Psoas muscle (tissue), 8 donors: ENCODE measurements at regions of chr7 and their contacts with region 1.

Region 1: GRCh38 chr7:95476904-95477594 is 8.7 kb upstream of the ASB4 start:
- DNase-seq: peak; percentile 42 to 55
- ATAC-seq: peak; percentile 80 to 91 (median 84)
- H3K4me3 ChIP-seq: peak overlapping the region; percentile 52
- H3K27ac ChIP-seq: peak overlapping the region; percentile 74
- H3K4me1 ChIP-seq: no peaks in the 10 kb centered on the region
- H3K27me3 ChIP-seq: no peaks in the 10 kb centered on the region
- CTCF ChIP-seq: peak; percentile 83

Region 2: GRCh38 chr7:95246831-95247370 is 230.1 kb before region 1 on chr7:
- intact Hi-C with region 1: loop called in 1 of 2 experiments (anchors 10 kb)
- DNase-seq: no peak
- ATAC-seq: peak; percentile 51 to 81 (median 68)
- H3K4me3 ChIP-seq: no peak overlapping the region
- H3K27ac ChIP-seq: no peak overlapping the region
- H3K4me1 ChIP-seq: no peaks in the 10 kb centered on the region
- H3K27me3 ChIP-seq: no peaks in the 10 kb centered on the region
- CTCF ChIP-seq: peak; percentile 62

Region 3: DNA sequence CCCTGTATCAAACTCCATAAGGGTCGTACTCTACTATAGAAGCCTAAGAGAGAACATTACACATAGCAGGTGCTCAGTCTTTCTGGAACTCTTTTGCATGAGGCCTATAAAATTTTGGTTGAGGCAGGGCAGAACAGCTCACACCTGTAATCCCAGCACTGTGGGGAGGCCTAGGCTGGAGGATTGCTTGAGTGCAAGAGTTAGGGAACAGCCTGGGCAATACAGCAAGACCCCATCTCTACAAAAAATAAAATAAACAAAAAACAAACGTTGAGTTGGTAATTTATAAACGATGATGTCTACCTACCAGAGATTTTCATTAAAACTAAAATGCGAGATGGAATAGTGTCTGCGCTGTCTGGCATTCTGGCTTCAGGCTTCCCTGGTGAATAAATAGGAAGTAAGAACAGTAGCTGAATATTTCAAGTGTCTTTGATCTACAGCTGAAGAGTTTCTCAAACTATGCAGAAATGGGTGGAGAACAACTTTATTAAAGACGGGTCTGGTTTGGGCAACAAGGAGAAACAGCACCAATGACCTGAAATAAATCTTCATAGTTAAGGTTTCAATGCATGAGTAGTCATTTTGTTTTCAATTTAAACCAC is 43.0 kb before region 1 on chr7:
- intact Hi-C with region 1: loop called in 1 of 2 experiments (anchors 2 kb)
- DNase-seq: no peak
- ATAC-seq: peak in 1 of 4 donors; percentile 14
- H3K4me3 ChIP-seq: peak overlapping the region; percentile 85
- H3K27ac ChIP-seq: peak overlapping the region; percentile 91
- H3K4me1 ChIP-seq: no peaks in the 10 kb centered on the region
- H3K27me3 ChIP-seq: no peaks in the 10 kb centered on the region
- CTCF ChIP-seq: no peak

Region 4: DNA sequence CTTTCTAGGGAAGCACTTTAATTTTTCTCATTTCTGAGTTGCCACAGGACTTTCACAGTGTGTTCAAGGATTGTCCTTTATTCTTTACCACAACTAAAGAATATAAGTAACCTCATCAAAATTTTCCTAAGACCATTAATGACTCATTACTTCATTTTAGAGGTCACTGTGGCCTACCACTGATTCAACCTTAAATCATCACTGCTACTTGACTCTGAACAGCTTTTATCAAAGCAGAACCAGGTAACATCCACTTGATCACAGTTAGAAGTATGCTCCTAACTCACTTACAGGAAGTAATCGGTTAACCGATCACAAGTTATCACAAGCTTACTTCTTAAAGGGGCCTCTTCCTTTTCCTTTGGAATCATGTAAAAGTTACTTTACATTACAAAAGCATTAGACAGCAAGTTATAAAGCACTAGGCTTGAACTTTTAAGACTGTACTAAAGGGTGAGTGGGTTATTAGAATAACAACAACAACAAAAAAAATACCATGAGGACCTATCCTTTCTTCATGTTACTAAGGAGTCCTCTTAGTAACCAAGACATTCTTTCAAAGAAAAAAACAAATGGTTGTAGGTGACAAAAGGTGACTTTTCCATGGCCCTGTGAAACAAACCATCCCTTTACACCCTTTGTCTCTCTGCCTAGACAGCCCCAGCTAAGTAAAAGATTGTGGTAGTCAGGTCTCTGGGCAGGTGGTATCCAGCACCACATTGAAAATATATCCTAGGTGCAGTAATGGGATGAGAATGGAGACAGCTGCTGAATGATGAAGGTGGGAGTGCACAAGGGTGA is 159.3 kb after region 1 on chr7:
- intact Hi-C with region 1: no loop called
- DNase-seq: no peak
- ATAC-seq: no peak
- H3K4me3 ChIP-seq: no peak overlapping the region
- H3K27ac ChIP-seq: no peak overlapping the region
- H3K4me1 ChIP-seq: no peaks in the 10 kb centered on the region
- H3K27me3 ChIP-seq: no peaks in the 10 kb centered on the region
- CTCF ChIP-seq: no peak